Naive thymus-derived CD4-positive, alpha-beta T cell (primary cell): ENCODE measurements at regions of chrX and their contacts with region 1.

Region 1: DNA sequence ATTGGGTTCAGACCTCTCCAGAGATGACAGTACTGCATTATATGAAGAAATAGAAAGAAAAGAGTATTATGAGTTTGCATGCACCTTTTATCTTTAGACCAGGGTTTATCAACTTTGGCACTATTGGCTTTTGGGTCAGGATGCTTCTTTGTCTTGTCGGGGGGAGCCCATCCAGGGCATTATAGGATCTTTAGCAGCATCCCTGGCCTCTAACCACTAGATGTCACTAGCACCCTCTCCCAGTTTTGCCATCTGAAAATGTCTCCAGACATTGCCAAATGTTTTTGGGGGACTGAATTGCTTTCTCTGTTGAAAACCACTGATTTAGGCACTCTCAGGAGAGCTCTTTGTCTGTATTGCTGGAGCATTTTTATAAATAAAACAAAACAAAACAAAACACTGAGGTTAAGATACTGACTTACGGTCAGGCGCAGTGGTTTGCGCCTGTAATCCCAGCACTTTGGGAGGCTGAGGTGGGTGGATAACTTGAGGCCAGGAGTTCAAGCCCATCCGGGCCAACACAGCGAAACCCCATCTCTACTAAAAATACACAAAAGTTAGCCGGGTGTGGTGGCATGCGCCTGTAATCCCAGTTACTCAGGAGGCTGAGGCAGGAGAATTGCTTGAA is 23.6 kb downstream of the CA5B start:
- DNase-seq: peak in 7 of 9 donors; percentile 6 to 54 (median 43)
- ATAC-seq: peak; percentile 75
- H3K4me3 ChIP-seq: no peak overlapping the region
- H3K4me3 Mint-ChIP-seq: no peak overlapping the region
- H3K27ac ChIP-seq: peak overlapping the region; percentile 6
- H3K27ac Mint-ChIP-seq: peak overlapping the region in 8 of 9 donors; percentile 37 to 77 (median 68)
- H3K4me1 ChIP-seq: peaks cover 13 to 18% of the 10 kb centered on the region in 2 donors
- H3K4me1 Mint-ChIP-seq: peaks cover 11 to 49% (median 31%) of the 10 kb centered on the region in 7 donors
- H3K27me3 ChIP-seq: no peaks in the 10 kb centered on the region
- H3K27me3 Mint-ChIP-seq: no peaks in the 10 kb centered on the region

Region 2: GRCh38 chrX:14449782-14450181 is 1311.9 kb before region 1 on chrX:
- CTCF ChIA-PET with region 1: no interaction called
- POLR2A ChIA-PET with region 1: no interaction called
- intact Hi-C with region 1: no loop called
- DNase-seq: no peak
- ATAC-seq: no peak
- H3K4me3 ChIP-seq: no peak overlapping the region
- H3K4me3 Mint-ChIP-seq: no peak overlapping the region
- H3K27ac ChIP-seq: no peak overlapping the region
- H3K27ac Mint-ChIP-seq: no peak overlapping the region
- H3K4me1 ChIP-seq: no peaks in the 10 kb centered on the region
- H3K4me1 Mint-ChIP-seq: no peaks in the 10 kb centered on the region
- H3K27me3 ChIP-seq: no peaks in the 10 kb centered on the region
- H3K27me3 Mint-ChIP-seq: peaks cover 0 to 6% (median 0%) of the 10 kb centered on the region in 5 donors

Region 3: GRCh38 chrX:15737960-15738902 is 23.4 kb before region 1 on chrX and contains the start of gene CA5B:
- CTCF ChIA-PET with region 1: interaction called, 6 read pairs
- POLR2A ChIA-PET with region 1: interaction called, 162 read pairs
- intact Hi-C with region 1: loop called in 1 of 2 experiments (anchors 1 kb)
- DNase-seq: peak; percentile 93 to 100 (median 98)
- ATAC-seq: peak; percentile 98
- H3K4me3 ChIP-seq: peak within 1 kb of the TSS; percentile 82
- H3K4me3 Mint-ChIP-seq: peak within 1 kb of the TSS; percentile 89 to 99 (median 94)
- H3K27ac ChIP-seq: peak within 1 kb of the TSS; percentile 72
- H3K27ac Mint-ChIP-seq: peak within 1 kb of the TSS; percentile 71 to 95 (median 91)
- H3K4me1 ChIP-seq: peaks cover 16 to 19% of the 10 kb centered on the region in 2 donors
- H3K4me1 Mint-ChIP-seq: peaks cover 18 to 60% (median 43%) of the 10 kb centered on the region in 7 donors
- H3K27me3 ChIP-seq: no peaks in the 10 kb centered on the region
- H3K27me3 Mint-ChIP-seq: peaks cover 0 to 2% (median 0%) of the 10 kb centered on the region in 5 donors
- total RNA-seq, gene CA5B: 16.4 to 64.6 (median 39.5) TPM

Region 4: DNA sequence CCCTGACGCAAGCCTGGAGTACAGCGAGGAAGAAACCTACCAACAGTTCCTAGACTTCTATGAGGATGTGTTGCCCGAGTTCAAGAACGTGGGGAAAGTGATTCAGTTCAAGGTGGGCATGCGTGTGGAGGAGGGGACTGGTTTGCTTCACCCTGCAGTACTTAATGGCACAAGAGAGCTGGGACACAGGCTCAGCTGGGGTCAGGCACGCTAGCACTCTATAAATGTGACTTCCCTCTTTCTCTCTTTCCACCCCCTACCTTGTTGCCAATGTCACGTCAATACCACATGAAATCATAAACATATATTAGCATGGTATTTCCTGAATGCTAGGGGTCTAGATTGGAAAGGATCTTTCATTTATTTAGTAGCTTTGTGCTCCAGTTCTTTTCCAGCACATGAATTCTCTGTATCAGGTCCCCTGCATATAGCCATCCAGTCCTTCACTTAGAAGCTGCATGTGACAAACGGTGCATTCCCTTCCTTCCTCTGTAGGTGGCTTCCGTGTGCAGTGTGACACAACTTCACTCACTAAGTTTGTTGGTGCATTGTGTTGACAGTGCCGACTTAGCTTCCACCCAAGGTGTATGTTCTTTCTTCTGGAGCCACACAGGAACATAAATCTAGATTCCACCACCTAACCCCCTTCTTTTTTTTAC is 54.2 kb after region 1 on chrX:
- CTCF ChIA-PET with region 1: no interaction called
- POLR2A ChIA-PET with region 1: interaction called, 3 read pairs
- intact Hi-C with region 1: loop called in 1 of 2 experiments (anchors 2 kb)
- DNase-seq: peak in 5 of 9 donors; percentile 11 to 32 (median 18)
- ATAC-seq: peak; percentile 82
- H3K4me3 ChIP-seq: no peak overlapping the region
- H3K4me3 Mint-ChIP-seq: peak overlapping the region in 5 of 10 donors; percentile 13 to 63 (median 39)
- H3K27ac ChIP-seq: no peak overlapping the region
- H3K27ac Mint-ChIP-seq: peak overlapping the region; percentile 24 to 88 (median 52)
- H3K4me1 ChIP-seq: peaks cover 14 to 26% of the 10 kb centered on the region in 2 donors
- H3K4me1 Mint-ChIP-seq: peaks cover 6 to 47% (median 36%) of the 10 kb centered on the region in 7 donors
- H3K27me3 ChIP-seq: no peaks in the 10 kb centered on the region
- H3K27me3 Mint-ChIP-seq: no peaks in the 10 kb centered on the region

Region 5: DNA sequence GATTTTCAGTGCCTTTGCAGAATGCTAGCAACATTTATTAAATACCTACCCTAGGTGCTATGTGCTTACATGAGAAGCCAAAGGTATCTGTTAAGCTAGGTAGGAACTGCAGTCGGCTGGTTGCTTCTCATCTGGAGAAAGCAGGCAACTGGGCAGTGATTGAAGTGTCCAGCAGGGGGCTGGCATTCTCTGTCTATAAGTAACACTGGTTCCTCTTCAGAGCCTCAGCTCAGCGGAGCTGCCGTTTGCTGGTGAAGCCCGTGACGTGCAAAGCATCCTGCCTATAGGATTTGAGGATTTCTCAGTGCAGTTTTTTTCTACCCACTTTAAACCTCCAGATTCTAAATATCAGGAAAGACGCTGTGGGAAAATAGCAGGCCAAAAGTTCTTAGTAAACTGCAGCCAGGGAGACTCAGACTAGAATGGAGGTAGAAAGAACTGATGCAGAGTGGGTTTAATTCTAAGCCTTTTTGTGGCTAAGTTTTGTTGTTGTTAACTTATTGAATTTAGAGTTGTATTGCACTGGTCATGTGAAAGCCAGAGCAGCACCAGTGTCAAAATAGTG is 361.6 kb after region 1 on chrX and contains the start of gene GRPR:
- CTCF ChIA-PET with region 1: no interaction called
- POLR2A ChIA-PET with region 1: no interaction called
- intact Hi-C with region 1: loop called (anchors 1 to 5 kb)
- DNase-seq: peak; percentile 20 to 61 (median 48)
- ATAC-seq: peak; percentile 92
- H3K4me3 ChIP-seq: no peak within 1 kb of the TSS
- H3K4me3 Mint-ChIP-seq: peak within 1 kb of the TSS in 4 of 10 donors; percentile 37 to 48 (median 41)
- H3K27ac ChIP-seq: no peak within 1 kb of the TSS
- H3K27ac Mint-ChIP-seq: peak within 1 kb of the TSS in 1 of 9 donors; percentile 10
- H3K4me1 ChIP-seq: no peaks in the 10 kb centered on the region
- H3K4me1 Mint-ChIP-seq: peaks cover 0 to 17% (median 6%) of the 10 kb centered on the region in 7 donors
- H3K27me3 ChIP-seq: no peaks in the 10 kb centered on the region
- H3K27me3 Mint-ChIP-seq: peaks cover 0 to 26% (median under 1%) of the 10 kb centered on the region in 5 donors
- total RNA-seq, gene GRPR: 0.16 to 0.51 (median 0.24) TPM in 3 of 5 experiments, not detected in the others

Region 6: GRCh38 chrX:16436348-16437188 is 674.9 kb after region 1 on chrX:
- CTCF ChIA-PET with region 1: no interaction called
- POLR2A ChIA-PET with region 1: no interaction called
- intact Hi-C with region 1: loop called in 1 of 2 experiments (anchors 2 kb)
- DNase-seq: peak; percentile 19 to 55 (median 44)
- ATAC-seq: peak; percentile 78
- H3K4me3 ChIP-seq: no peak overlapping the region
- H3K4me3 Mint-ChIP-seq: peak overlapping the region in 1 of 10 donors; percentile 44
- H3K27ac ChIP-seq: no peak overlapping the region
- H3K27ac Mint-ChIP-seq: peak overlapping the region in 1 of 9 donors; percentile 0
- H3K4me1 ChIP-seq: peaks cover 0 to 15% of the 10 kb centered on the region in 2 donors
- H3K4me1 Mint-ChIP-seq: peaks cover 3 to 19% (median 15%) of the 10 kb centered on the region in 7 donors
- H3K27me3 ChIP-seq: no peaks in the 10 kb centered on the region
- H3K27me3 Mint-ChIP-seq: no peaks in the 10 kb centered on the region

Region 7: GRCh38 chrX:16670998-16671397 is 909.3 kb after region 1 on chrX:
- CTCF ChIA-PET with region 1: interaction called, 5 read pairs
- POLR2A ChIA-PET with region 1: no interaction called
- intact Hi-C with region 1: loop called in 1 of 2 experiments (anchors 2 kb)
- DNase-seq: peak in 7 of 9 donors; percentile 13 to 57 (median 37)
- ATAC-seq: peak; percentile 64
- H3K4me3 ChIP-seq: no peak overlapping the region
- H3K4me3 Mint-ChIP-seq: no peak overlapping the region
- H3K27ac ChIP-seq: no peak overlapping the region
- H3K27ac Mint-ChIP-seq: peak overlapping the region in 1 of 9 donors; percentile 32
- H3K4me1 ChIP-seq: no peaks in the 10 kb centered on the region
- H3K4me1 Mint-ChIP-seq: peaks cover 0 to 5% (median 0%) of the 10 kb centered on the region in 7 donors
- H3K27me3 ChIP-seq: no peaks in the 10 kb centered on the region
- H3K27me3 Mint-ChIP-seq: no peaks in the 10 kb centered on the region